ENCODE measurements at regions of chr7 and their contacts with region 1.

Region 1: DNA sequence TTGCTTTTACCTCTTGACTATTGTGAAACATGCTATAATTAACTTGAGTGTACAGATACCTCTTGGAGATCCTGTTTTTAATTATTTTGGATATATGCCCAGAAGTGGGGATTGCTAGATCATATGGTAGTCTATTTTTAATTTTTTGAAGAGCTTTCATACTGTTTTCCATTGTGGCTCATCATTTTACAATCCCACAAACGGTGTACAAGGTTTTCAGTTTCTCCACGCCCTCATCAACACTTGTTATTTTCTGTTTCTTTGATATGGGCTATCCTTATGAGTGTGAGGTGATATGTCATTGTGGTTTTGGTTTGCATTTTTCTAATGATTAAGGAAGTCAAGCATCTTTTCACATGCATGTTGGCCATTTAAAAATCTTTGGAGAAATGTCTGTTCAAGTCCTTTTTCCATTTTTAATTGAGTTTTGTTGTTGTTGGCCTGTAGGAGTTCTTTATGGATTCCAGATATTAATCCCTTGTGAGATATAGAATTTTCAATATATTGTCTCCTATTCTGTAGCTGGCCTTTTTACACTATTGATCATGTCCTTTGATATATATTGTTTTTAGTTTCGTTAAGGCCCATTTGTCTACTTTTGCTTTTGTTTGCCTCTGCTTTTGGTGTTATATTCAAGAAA is 7.5 kb downstream of the AGK start:
- DNase-seq: peak; percentile 22
- ATAC-seq: peak; percentile 72
- H3K4me3 ChIP-seq: no peak overlapping the region
- H3K27ac ChIP-seq: no peak overlapping the region
- H3K4me1 ChIP-seq: no peaks in the 10 kb centered on the region
- H3K27me3 ChIP-seq: no peaks in the 10 kb centered on the region
- CTCF ChIP-seq: no peak

Region 2: DNA sequence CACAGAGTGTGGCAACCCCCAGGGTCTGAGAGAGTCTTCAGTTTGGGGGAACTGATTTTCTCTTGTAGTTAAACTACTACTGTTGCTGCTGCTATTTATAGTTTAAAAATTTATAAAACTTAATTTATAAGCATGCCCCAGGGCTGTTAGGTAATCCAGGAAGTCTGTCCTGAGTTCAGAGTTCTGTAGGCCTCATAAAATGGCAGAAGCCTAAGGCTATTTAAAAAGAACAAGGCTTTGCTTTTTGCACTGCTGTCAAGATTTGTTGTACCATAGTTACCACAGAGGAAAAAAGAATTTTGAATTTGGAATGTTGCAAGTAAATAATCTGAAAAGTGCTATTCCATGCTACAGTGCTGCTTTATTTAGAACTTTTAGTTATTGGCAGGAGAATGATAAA is 58.6 kb after region 1 on chr7:
- CTCF ChIA-PET with region 1: no interaction called
- POLR2A ChIA-PET with region 1: no interaction called
- intact Hi-C with region 1: loop called (anchors 5 kb)
- DNase-seq: peak; percentile 53
- ATAC-seq: peak; percentile 73
- H3K4me3 ChIP-seq: no peak overlapping the region
- H3K27ac ChIP-seq: no peak overlapping the region
- H3K4me1 ChIP-seq: peaks cover 9% of the 10 kb centered on the region; the same call in 1 of the 2 replicates
- H3K27me3 ChIP-seq: no peaks in the 10 kb centered on the region
- CTCF ChIP-seq: no peak

Region 3: GRCh38 chr7:141630621-141631020 is 72.0 kb after region 1 on chr7:
- CTCF ChIA-PET with region 1: no interaction called
- POLR2A ChIA-PET with region 1: no interaction called
- intact Hi-C with region 1: no loop called
- DNase-seq: no peak
- ATAC-seq: no peak
- H3K4me3 ChIP-seq: no peak overlapping the region
- H3K27ac ChIP-seq: no peak overlapping the region
- H3K4me1 ChIP-seq: no peaks in the 10 kb centered on the region
- H3K27me3 ChIP-seq: no peaks in the 10 kb centered on the region
- CTCF ChIP-seq: no peak

Measured in PC-3 (cell line).